Naive thymus-derived CD4-positive, alpha-beta T cell (primary cell): ENCODE measurements at regions of chr7 and their contacts with region 1.

Region 1: DNA sequence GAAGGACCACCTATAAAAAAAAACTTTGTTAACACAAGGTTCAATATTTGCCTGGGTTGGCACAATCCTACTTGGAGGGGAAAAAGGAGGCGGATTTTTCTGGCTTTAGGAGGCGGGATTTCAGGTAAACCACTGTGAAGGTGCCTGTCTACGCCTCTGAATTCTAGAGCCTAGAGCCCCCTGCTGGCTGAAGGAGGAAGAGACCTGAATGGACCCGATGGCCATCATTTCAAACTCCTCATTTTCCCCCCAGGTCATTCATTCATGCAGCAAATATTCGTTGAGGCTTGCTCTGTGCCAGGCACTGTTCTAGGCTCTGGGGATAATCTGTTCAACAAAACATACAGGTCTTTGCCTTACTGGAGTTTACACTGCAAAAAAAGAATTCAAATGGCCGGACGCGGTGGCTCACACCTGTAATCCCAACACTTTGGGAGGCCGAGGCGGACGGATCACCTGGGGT is 90.3 kb upstream of the NFE2L3 start:
- DNase-seq: peak; percentile 37 to 71 (median 59)
- ATAC-seq: peak; percentile 88
- H3K4me3 ChIP-seq: no peak overlapping the region
- H3K4me3 Mint-ChIP-seq: no peak overlapping the region
- H3K27ac ChIP-seq: no peak overlapping the region
- H3K27ac Mint-ChIP-seq: no peak overlapping the region
- H3K4me1 ChIP-seq: no peaks in the 10 kb centered on the region
- H3K4me1 Mint-ChIP-seq: peaks cover 0 to 13% (median 0%) of the 10 kb centered on the region in 7 donors
- H3K27me3 ChIP-seq: no peaks in the 10 kb centered on the region
- H3K27me3 Mint-ChIP-seq: peaks cover 5 to 33% (median 15%) of the 10 kb centered on the region in 5 donors

Region 2: GRCh38 chr7:25812086-25812850 is 249.5 kb before region 1 on chr7:
- CTCF ChIA-PET with region 1: no interaction called
- POLR2A ChIA-PET with region 1: no interaction called
- intact Hi-C with region 1: no loop called
- DNase-seq: no peak
- ATAC-seq: no peak
- H3K4me3 ChIP-seq: no peak overlapping the region
- H3K4me3 Mint-ChIP-seq: no peak overlapping the region
- H3K27ac ChIP-seq: no peak overlapping the region
- H3K27ac Mint-ChIP-seq: peak overlapping the region in 1 of 9 donors; percentile 3
- H3K4me1 ChIP-seq: no peaks in the 10 kb centered on the region
- H3K4me1 Mint-ChIP-seq: no peaks in the 10 kb centered on the region
- H3K27me3 ChIP-seq: no peaks in the 10 kb centered on the region
- H3K27me3 Mint-ChIP-seq: peaks cover 2 to 38% (median 18%) of the 10 kb centered on the region in 5 donors

Region 3: GRCh38 chr7:25951031-25951948 is 110.4 kb before region 1 on chr7:
- CTCF ChIA-PET with region 1: no interaction called
- POLR2A ChIA-PET with region 1: no interaction called
- intact Hi-C with region 1: loop called in 1 of 2 experiments (anchors 1 kb)
- DNase-seq: peak; percentile 70 to 94 (median 87)
- ATAC-seq: peak; percentile 99
- H3K4me3 ChIP-seq: peak overlapping the region; percentile 61
- H3K4me3 Mint-ChIP-seq: peak overlapping the region; percentile 87 to 94 (median 92)
- H3K27ac ChIP-seq: peak overlapping the region; percentile 52
- H3K27ac Mint-ChIP-seq: peak overlapping the region in 7 of 9 donors; percentile 45 to 87 (median 81)
- H3K4me1 ChIP-seq: peaks cover 7 to 14% of the 10 kb centered on the region in 2 donors
- H3K4me1 Mint-ChIP-seq: peaks cover 16 to 31% (median 20%) of the 10 kb centered on the region in 7 donors
- H3K27me3 ChIP-seq: no peaks in the 10 kb centered on the region
- H3K27me3 Mint-ChIP-seq: peaks cover 0 to 22% (median 5%) of the 10 kb centered on the region in 5 donors

Region 4: DNA sequence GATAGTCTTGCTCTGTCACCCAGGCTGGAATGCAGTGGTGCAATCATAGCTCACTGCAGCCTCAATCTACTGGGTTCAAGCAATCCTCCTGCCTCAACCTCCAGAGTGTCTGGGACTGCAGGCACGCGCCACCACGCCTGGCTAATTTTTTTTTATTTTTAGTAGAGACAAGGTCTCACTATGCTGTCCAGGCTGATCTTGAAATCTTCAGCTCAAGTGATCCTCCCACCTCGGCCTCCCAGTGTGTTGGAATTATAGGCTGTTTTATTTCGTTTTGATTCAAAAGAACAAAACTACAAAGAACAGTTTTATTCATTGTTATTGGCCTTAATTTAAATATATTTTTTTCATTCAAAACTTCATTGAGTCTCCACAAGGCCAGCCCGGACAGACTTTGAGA is 19.5 kb before region 1 on chr7:
- CTCF ChIA-PET with region 1: no interaction called
- POLR2A ChIA-PET with region 1: no interaction called
- intact Hi-C with region 1: no loop called
- DNase-seq: no peak
- ATAC-seq: no peak
- H3K4me3 ChIP-seq: no peak overlapping the region
- H3K4me3 Mint-ChIP-seq: no peak overlapping the region
- H3K27ac ChIP-seq: no peak overlapping the region
- H3K27ac Mint-ChIP-seq: no peak overlapping the region
- H3K4me1 ChIP-seq: no peaks in the 10 kb centered on the region
- H3K4me1 Mint-ChIP-seq: peaks cover 0 to 10% (median 9%) of the 10 kb centered on the region in 7 donors
- H3K27me3 ChIP-seq: no peaks in the 10 kb centered on the region
- H3K27me3 Mint-ChIP-seq: peaks cover 26 to 53% (median 30%) of the 10 kb centered on the region in 5 donors